Naive thymus-derived CD8-positive, alpha-beta T cell (primary cell): ENCODE measurements at regions of chr3 and their contacts with region 1.

Region 1: GRCh38 chr3:120095226-120095978 is 1.2 kb upstream of the GSK3B start:
- DNase-seq: peak; percentile 76 to 92 (median 85)
- ATAC-seq: peak; percentile 30 to 37
- H3K4me3 Mint-ChIP-seq: no peak overlapping the region
- H3K27ac Mint-ChIP-seq: peak overlapping the region in 2 of 10 donors; percentile 96 to 98
- H3K4me1 Mint-ChIP-seq: peaks cover 13 to 31% (median 25%) of the 10 kb centered on the region in 4 donors
- H3K27me3 Mint-ChIP-seq: peaks cover 0 to 5% (median 0%) of the 10 kb centered on the region in 5 donors

Region 2: GRCh38 chr3:119463171-119464169 is 631.9 kb before region 1 on chr3 and contains the start of gene TMEM39A:
- POLR2A ChIA-PET with region 1: interaction called, 17 read pairs
- DNase-seq: peak; percentile 97 to 100 (median 98)
- ATAC-seq: peak; percentile 88 to 89
- H3K4me3 Mint-ChIP-seq: peak within 1 kb of the TSS; percentile 90 to 96 (median 94)
- H3K27ac Mint-ChIP-seq: peak within 1 kb of the TSS; percentile 97 to 100 (median 99)
- H3K4me1 Mint-ChIP-seq: peaks cover 12 to 47% (median 36%) of the 10 kb centered on the region in 4 donors
- H3K27me3 Mint-ChIP-seq: peaks cover 0 to 4% (median 0%) of the 10 kb centered on the region in 5 donors
- polyA plus RNA-seq, gene TMEM39A: 6.5 to 11.9 (median 10.4) TPM